ENCODE measurements at regions of chr13 and their contacts with region 1.

Region 1: DNA sequence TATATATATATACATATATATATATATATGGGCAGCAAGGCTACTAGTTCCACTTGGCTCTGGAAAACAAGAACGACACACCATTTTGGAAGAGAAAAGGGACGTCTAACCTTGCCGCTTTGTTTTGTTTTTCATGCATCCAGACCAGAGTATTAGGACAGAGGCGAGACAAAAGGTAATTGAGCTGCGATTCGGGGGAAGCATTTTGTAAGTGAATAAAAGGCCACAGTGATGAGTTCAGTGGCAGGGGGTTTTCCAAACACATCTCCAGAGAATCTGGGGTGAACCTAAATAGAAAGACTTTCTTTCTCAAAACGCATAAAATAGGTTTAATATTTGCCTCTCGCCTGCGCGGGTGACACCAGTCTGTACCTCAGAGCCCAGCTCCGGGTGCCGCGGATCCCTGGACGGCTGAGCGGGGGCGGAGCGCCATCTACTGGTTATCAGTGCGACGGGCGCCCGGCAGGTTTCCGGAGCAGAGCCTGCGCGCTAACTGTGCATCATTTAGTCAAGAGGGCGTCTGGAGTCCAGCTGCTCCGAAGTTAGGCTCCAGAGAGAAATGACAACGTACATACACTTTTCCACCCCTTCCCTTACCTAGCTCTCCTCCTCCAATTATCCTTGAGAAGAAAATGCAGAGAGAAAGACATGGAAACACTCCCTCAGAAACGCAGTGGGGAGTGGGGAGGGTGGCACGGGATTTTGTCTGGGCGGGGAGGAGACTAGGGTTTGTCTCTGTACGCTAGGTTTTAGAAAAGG is 262.3 kb downstream of the TBC1D4 start:
- DNase-seq: peak; percentile 80
- H3K4me3 ChIP-seq: peak overlapping the region in 1 of 4 donors; percentile 19
- H3K27ac ChIP-seq: no peak overlapping the region
- H3K4me1 ChIP-seq: peaks cover 0 to 10% (median 5%) of the 10 kb centered on the region in 4 donors
- H3K27me3 ChIP-seq: no peaks in the 10 kb centered on the region
- CTCF ChIP-seq: peak; percentile 82 to 96 (median 95)
- EP300 ChIP-seq: no peak
- POLR2A ChIP-seq: no peak

Region 2: GRCh38 chr13:73740666-73741065 is 1479.0 kb before region 1 on chr13:
- in situ Hi-C with region 1: loop called in 1 of 4 experiments (anchors 25 kb)
- intact Hi-C with region 1: no loop called
- DNase-seq: no peak
- H3K4me3 ChIP-seq: peak overlapping the region in 1 of 4 donors; percentile 7
- H3K27ac ChIP-seq: peak overlapping the region in 1 of 4 donors; percentile 9
- H3K4me1 ChIP-seq: no peaks in the 10 kb centered on the region
- H3K27me3 ChIP-seq: no peaks in the 10 kb centered on the region
- CTCF ChIP-seq: no peak
- EP300 ChIP-seq: no peak
- POLR2A ChIP-seq: no peak

Region 3: GRCh38 chr13:73754727-73755292 is 1464.8 kb before region 1 on chr13:
- in situ Hi-C with region 1: loop called in 2 of 4 experiments (anchors 25 kb)
- intact Hi-C with region 1: no loop called
- DNase-seq: no peak
- H3K4me3 ChIP-seq: no peak overlapping the region
- H3K27ac ChIP-seq: no peak overlapping the region
- H3K4me1 ChIP-seq: peaks cover 0 to 15% (median 3%) of the 10 kb centered on the region in 4 donors
- H3K27me3 ChIP-seq: no peaks in the 10 kb centered on the region
- CTCF ChIP-seq: peak; percentile 65 to 72 (median 69)
- EP300 ChIP-seq: no peak
- POLR2A ChIP-seq: no peak